Naive thymus-derived CD4-positive, alpha-beta T cell (primary cell): ENCODE measurements at regions of chr6 and their contacts with region 1.

Region 1: GRCh38 chr6:158649289-158650143 is at the start of gene SYTL3:
- DNase-seq: peak; percentile 58 to 93 (median 90)
- ATAC-seq: peak; percentile 78
- H3K4me3 ChIP-seq: peak within 1 kb of the TSS; percentile 44
- H3K4me3 Mint-ChIP-seq: peak within 1 kb of the TSS; percentile 66 to 87 (median 80)
- H3K27ac ChIP-seq: peak within 1 kb of the TSS; percentile 83
- H3K27ac Mint-ChIP-seq: peak within 1 kb of the TSS; percentile 90 to 99 (median 96)
- H3K4me1 ChIP-seq: peaks cover 38 to 46% of the 10 kb centered on the region in 2 donors
- H3K4me1 Mint-ChIP-seq: peaks cover 42 to 75% (median 67%) of the 10 kb centered on the region in 7 donors
- H3K27me3 ChIP-seq: no peaks in the 10 kb centered on the region
- H3K27me3 Mint-ChIP-seq: no peaks in the 10 kb centered on the region
- total RNA-seq, gene SYTL3: 25.8 to 67.0 (median 31.1) TPM

Region 2: GRCh38 chr6:157879873-157880254 is 769.7 kb before region 1 on chr6:
- CTCF ChIA-PET with region 1: no interaction called
- POLR2A ChIA-PET with region 1: no interaction called
- intact Hi-C with region 1: loop called (anchors 2 to 10 kb)
- DNase-seq: no peak
- ATAC-seq: no peak
- H3K4me3 ChIP-seq: no peak overlapping the region
- H3K4me3 Mint-ChIP-seq: peak overlapping the region in 5 of 10 donors; percentile 4 to 68 (median 19)
- H3K27ac ChIP-seq: no peak overlapping the region
- H3K27ac Mint-ChIP-seq: peak overlapping the region in 8 of 9 donors; percentile 2 to 99 (median 70)
- H3K4me1 ChIP-seq: peaks cover 0 to 46% of the 10 kb centered on the region in 2 donors
- H3K4me1 Mint-ChIP-seq: peaks cover 16 to 88% (median 84%) of the 10 kb centered on the region in 7 donors
- H3K27me3 ChIP-seq: no peaks in the 10 kb centered on the region
- H3K27me3 Mint-ChIP-seq: no peaks in the 10 kb centered on the region

Region 3: DNA sequence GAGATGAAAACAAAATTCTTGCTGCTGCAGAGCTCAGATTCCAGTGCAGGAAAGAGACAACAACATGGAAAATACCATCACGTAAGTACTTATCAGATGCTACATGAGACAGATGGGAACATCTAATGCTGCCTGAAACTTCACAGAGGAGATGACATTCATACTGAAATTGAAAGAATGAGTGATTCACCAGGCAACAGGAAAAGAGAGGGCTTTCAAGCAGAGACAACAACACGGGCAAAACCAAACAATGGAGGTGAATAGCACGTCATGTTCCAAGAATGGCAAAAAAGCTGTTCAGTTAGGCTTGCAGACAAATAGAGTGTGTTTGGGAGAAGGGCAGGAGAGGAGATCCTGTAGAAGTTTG is 442.1 kb before region 1 on chr6:
- CTCF ChIA-PET with region 1: no interaction called
- POLR2A ChIA-PET with region 1: no interaction called
- intact Hi-C with region 1: loop called in 1 of 2 experiments (anchors 1 kb)
- DNase-seq: peak in 4 of 9 donors; percentile 9 to 42 (median 18)
- ATAC-seq: peak; percentile 54
- H3K4me3 ChIP-seq: no peak overlapping the region
- H3K4me3 Mint-ChIP-seq: peak overlapping the region in 7 of 10 donors; percentile 2 to 66 (median 22)
- H3K27ac ChIP-seq: no peak overlapping the region
- H3K27ac Mint-ChIP-seq: peak overlapping the region in 7 of 9 donors; percentile 4 to 90 (median 25)
- H3K4me1 ChIP-seq: no peaks in the 10 kb centered on the region
- H3K4me1 Mint-ChIP-seq: peaks cover 6 to 47% (median 13%) of the 10 kb centered on the region in 7 donors
- H3K27me3 ChIP-seq: no peaks in the 10 kb centered on the region
- H3K27me3 Mint-ChIP-seq: peaks cover 0 to 10% (median 4%) of the 10 kb centered on the region in 5 donors

Region 4: GRCh38 chr6:158639056-158639455 is 10.5 kb before region 1 on chr6:
- CTCF ChIA-PET with region 1: interaction called, 15 read pairs
- POLR2A ChIA-PET with region 1: interaction called, 78 read pairs
- intact Hi-C with region 1: loop called (anchors 1 kb)
- DNase-seq: no peak
- ATAC-seq: no peak
- H3K4me3 ChIP-seq: no peak overlapping the region
- H3K4me3 Mint-ChIP-seq: peak overlapping the region in 3 of 10 donors; percentile 2 to 39 (median 21)
- H3K27ac ChIP-seq: peak overlapping the region; percentile 37
- H3K27ac Mint-ChIP-seq: peak overlapping the region; percentile 44 to 86 (median 68)
- H3K4me1 ChIP-seq: peaks cover 56 to 59% of the 10 kb centered on the region in 2 donors
- H3K4me1 Mint-ChIP-seq: peaks cover 52 to 90% (median 82%) of the 10 kb centered on the region in 7 donors
- H3K27me3 ChIP-seq: no peaks in the 10 kb centered on the region
- H3K27me3 Mint-ChIP-seq: no peaks in the 10 kb centered on the region

Region 5: GRCh38 chr6:158819213-158819909 is 169.8 kb after region 1 on chr6 and contains the start of gene EZR:
- CTCF ChIA-PET with region 1: no interaction called
- POLR2A ChIA-PET with region 1: no interaction called
- intact Hi-C with region 1: loop called (anchors 2 to 5 kb)
- DNase-seq: peak; percentile 70 to 85 (median 80)
- ATAC-seq: peak; percentile 80
- H3K4me3 ChIP-seq: peak within 1 kb of the TSS; percentile 50
- H3K4me3 Mint-ChIP-seq: peak within 1 kb of the TSS; percentile 81 to 97 (median 90)
- H3K27ac ChIP-seq: peak within 1 kb of the TSS; percentile 99
- H3K27ac Mint-ChIP-seq: peak within 1 kb of the TSS; percentile 89 to 97 (median 91)
- H3K4me1 ChIP-seq: peaks cover 21 to 24% of the 10 kb centered on the region in 2 donors
- H3K4me1 Mint-ChIP-seq: peaks cover 30 to 47% (median 36%) of the 10 kb centered on the region in 7 donors
- H3K27me3 ChIP-seq: no peaks in the 10 kb centered on the region
- H3K27me3 Mint-ChIP-seq: no peaks in the 10 kb centered on the region
- total RNA-seq, gene EZR: 132 to 201 (median 163) TPM

Region 6: GRCh38 chr6:158926416-158926815 is 276.9 kb after region 1 on chr6:
- CTCF ChIA-PET with region 1: no interaction called
- POLR2A ChIA-PET with region 1: no interaction called
- intact Hi-C with region 1: no loop called
- DNase-seq: no peak
- ATAC-seq: no peak
- H3K4me3 ChIP-seq: no peak overlapping the region
- H3K4me3 Mint-ChIP-seq: no peak overlapping the region
- H3K27ac ChIP-seq: no peak overlapping the region
- H3K27ac Mint-ChIP-seq: no peak overlapping the region
- H3K4me1 ChIP-seq: no peaks in the 10 kb centered on the region
- H3K4me1 Mint-ChIP-seq: peaks cover 0 to 3% (median 0%) of the 10 kb centered on the region in 7 donors
- H3K27me3 ChIP-seq: no peaks in the 10 kb centered on the region
- H3K27me3 Mint-ChIP-seq: peaks cover 0 to 6% (median 0%) of the 10 kb centered on the region in 5 donors

Region 7: GRCh38 chr6:159062564-159062945 is 413.0 kb after region 1 on chr6:
- CTCF ChIA-PET with region 1: no interaction called
- POLR2A ChIA-PET with region 1: no interaction called
- intact Hi-C with region 1: loop called in 1 of 2 experiments (anchors 5 kb)
- DNase-seq: peak in 7 of 9 donors; percentile 75 to 89 (median 85)
- ATAC-seq: peak; percentile 92
- H3K4me3 ChIP-seq: peak overlapping the region; percentile 14
- H3K4me3 Mint-ChIP-seq: peak overlapping the region; percentile 66 to 84 (median 74)
- H3K27ac ChIP-seq: peak overlapping the region; percentile 79
- H3K27ac Mint-ChIP-seq: peak overlapping the region; percentile 96 to 99 (median 98)
- H3K4me1 ChIP-seq: peaks cover 52 to 54% of the 10 kb centered on the region in 2 donors
- H3K4me1 Mint-ChIP-seq: peaks cover 60 to 88% (median 86%) of the 10 kb centered on the region in 7 donors
- H3K27me3 ChIP-seq: no peaks in the 10 kb centered on the region
- H3K27me3 Mint-ChIP-seq: no peaks in the 10 kb centered on the region